Common myeloid progenitor, CD34-positive (primary cell): ENCODE measurements at regions of chr15 and their contacts with region 1.

Region 1: GRCh38 chr15:52112203-52112750 is 298 bp downstream of the BCL2L10 start:
- DNase-seq: peak in 2 of 3 donors; percentile 53 to 67
- H3K4me3 ChIP-seq: peak overlapping the region in 6 of 7 experiments; percentile 22 to 76 (median 54)
- H3K27ac ChIP-seq: no peak overlapping the region
- H3K4me1 ChIP-seq: peaks cover 5 to 25% (median 12%) of the 10 kb centered on the region in 4 experiments
- H3K27me3 ChIP-seq: peaks cover 0 to 8% (median 0%) of the 10 kb centered on the region in 5 experiments

Region 2: DNA sequence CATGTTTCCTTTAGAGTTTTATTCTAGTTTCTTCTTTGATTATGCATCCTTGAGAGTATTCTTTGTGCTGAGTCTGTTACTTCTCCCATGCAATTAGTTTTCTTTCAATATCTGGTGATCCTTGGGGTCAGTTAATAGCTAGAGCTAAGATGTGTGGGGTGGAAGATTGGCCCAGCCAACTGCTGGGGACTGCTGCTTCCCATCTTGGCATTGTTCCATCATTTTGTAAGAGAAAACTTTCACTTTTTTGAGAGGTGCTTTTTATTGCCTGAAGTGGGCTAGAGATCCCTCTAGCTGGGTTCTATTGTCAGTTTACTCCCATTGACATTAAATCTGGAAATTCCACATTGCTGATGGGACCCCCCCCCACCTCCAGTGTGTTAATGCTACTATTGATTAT is 15.1 kb before region 1 on chr15:
- CTCF ChIA-PET with region 1: interaction called, 10 read pairs
- POLR2A ChIA-PET with region 1: interaction called, 3 read pairs
- DNase-seq: peak in 2 of 3 donors; percentile 48 to 51
- H3K4me3 ChIP-seq: no peak overlapping the region
- H3K27ac ChIP-seq: no peak overlapping the region
- H3K4me1 ChIP-seq: peaks cover 5 to 56% (median 45%) of the 10 kb centered on the region in 4 experiments
- H3K27me3 ChIP-seq: no peaks in the 10 kb centered on the region

Region 3: GRCh38 chr15:52308446-52309153 is 196.3 kb after region 1 on chr15:
- CTCF ChIA-PET with region 1: no interaction called
- POLR2A ChIA-PET with region 1: no interaction called
- DNase-seq: no peak
- H3K4me3 ChIP-seq: no peak overlapping the region
- H3K27ac ChIP-seq: no peak overlapping the region
- H3K4me1 ChIP-seq: peaks cover 0 to under 1% (median 0%) of the 10 kb centered on the region in 4 experiments
- H3K27me3 ChIP-seq: no peaks in the 10 kb centered on the region